ENCODE measurements at regions of chr5 and their contacts with region 1.

Region 1: GRCh38 chr5:145981589-145982491 is 45.5 kb downstream of the SH3RF2 start:
- DNase-seq: peak; percentile 65 to 76
- H3K4me3 ChIP-seq: no peak overlapping the region
- H3K4me3 Mint-ChIP-seq: peak overlapping the region; percentile 27
- H3K27ac Mint-ChIP-seq: peak overlapping the region; percentile 74
- H3K4me1 ChIP-seq: peaks cover 70% of the 10 kb centered on the region
- H3K4me1 Mint-ChIP-seq: peaks cover 56% of the 10 kb centered on the region
- H3K27me3 ChIP-seq: no peaks in the 10 kb centered on the region
- H3K27me3 Mint-ChIP-seq: no peaks in the 10 kb centered on the region
- CTCF ChIP-seq: no peak

Region 2: DNA sequence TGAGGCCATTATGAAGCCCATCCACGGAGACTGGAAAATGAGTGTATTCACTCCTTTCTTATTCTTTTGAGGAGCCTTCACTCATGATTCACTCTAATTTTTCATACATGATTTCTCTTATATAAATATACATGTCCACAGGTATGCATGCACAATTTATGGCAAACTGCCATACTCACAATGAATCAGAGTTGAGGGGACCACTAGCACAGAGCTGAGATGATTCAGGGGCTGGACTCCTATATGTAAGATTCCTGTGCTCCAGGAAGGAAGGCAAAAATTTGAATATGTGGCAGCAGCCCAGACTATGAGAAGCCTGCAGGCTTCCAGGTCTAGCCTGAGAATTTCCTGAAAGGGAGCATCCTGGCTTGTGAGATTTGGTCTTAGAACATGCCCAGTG is 631.3 kb before region 1 on chr5:
- CTCF ChIA-PET with region 1: no interaction called
- POLR2A ChIA-PET with region 1: no interaction called
- intact Hi-C with region 1: no loop called
- DNase-seq: no peak
- H3K4me3 ChIP-seq: no peak overlapping the region
- H3K4me3 Mint-ChIP-seq: no peak overlapping the region
- H3K27ac Mint-ChIP-seq: no peak overlapping the region
- H3K4me1 ChIP-seq: no peaks in the 10 kb centered on the region
- H3K4me1 Mint-ChIP-seq: no peaks in the 10 kb centered on the region
- H3K27me3 ChIP-seq: no peaks in the 10 kb centered on the region
- H3K27me3 Mint-ChIP-seq: no peaks in the 10 kb centered on the region
- CTCF ChIP-seq: no peak

Region 3: DNA sequence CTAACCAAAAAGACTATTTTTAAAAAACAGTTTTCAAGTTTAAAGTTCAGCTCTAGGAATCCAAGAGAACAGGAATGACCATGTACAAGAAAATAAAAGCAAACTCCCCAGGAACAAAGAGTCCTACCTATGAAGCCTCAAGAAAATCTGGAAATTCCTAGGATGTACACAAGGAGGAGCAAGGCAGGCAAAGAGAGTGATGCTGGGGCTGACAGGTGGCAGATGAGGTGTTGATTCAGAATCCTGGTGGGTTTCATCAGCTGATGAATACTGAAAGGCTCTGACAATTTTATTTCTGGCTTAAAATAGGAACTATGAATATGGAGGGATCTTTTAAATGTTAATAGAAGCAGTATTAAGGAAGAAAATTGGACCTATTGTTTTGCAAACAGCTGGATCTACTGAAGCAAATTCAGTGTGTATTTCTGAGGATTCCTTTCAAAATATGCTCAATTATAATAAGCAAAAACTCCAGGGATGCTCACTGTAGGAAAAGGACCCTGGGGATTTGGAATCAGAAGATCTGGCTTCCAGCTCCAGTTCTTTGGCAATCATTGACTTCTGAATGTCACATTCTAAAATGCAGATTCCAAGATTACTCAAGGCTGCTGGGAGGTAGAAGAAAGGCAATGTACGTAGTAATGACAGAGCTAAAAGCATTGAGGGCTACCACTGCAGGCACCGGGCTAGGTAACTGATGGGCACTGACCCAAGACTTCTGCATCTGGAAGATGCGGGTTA is 73.5 kb before region 1 on chr5:
- CTCF ChIA-PET with region 1: interaction called, 5 read pairs
- POLR2A ChIA-PET with region 1: no interaction called
- intact Hi-C with region 1: loop called (anchors 1 kb)
- DNase-seq: peak in 1 of 2 experiments; percentile 52
- H3K4me3 ChIP-seq: no peak overlapping the region
- H3K4me3 Mint-ChIP-seq: no peak overlapping the region
- H3K27ac Mint-ChIP-seq: peak overlapping the region; percentile 18
- H3K4me1 ChIP-seq: peaks cover 14% of the 10 kb centered on the region; the same call in 1 of the 2 replicates
- H3K4me1 Mint-ChIP-seq: peaks cover 29% of the 10 kb centered on the region
- H3K27me3 ChIP-seq: no peaks in the 10 kb centered on the region
- H3K27me3 Mint-ChIP-seq: no peaks in the 10 kb centered on the region
- CTCF ChIP-seq: peak; percentile 43 to 69

Region 4: DNA sequence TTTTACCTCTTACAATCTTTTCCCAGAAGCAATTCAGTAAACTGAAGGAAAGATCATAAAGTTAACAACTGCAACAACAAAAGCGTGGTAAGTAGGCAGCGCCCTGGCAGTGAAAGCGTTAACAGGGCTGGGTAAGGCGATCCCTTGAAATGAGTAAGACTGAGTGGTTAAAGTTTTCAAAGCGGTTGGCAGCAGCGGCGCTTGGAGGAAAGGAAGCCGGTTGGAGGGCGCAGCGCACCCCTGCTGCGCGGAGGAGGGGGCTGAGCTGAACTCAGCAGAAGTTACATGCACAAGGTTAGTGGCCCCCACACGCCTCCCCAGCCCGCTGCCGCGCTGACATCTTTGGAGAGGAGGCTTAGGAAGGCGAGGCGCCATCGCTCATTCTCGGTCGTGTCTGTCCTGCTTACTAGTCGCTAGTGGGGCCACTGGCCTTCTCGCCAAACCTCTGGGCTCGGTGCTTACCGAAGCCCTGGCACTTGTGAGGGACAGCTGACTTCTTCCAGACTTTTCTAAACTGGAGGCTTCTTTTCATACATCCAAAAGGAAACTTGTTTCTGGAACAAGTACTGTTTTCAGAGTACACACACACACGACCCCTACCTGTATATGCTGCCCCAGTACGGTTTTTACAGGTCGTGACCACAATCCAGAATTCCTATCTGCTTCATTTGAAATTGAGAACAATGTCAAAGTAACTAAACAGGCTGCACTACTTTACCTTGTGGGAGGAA is 45.3 kb before region 1 on chr5 and contains the start of gene SH3RF2:
- CTCF ChIA-PET with region 1: interaction called, 14 read pairs
- POLR2A ChIA-PET with region 1: interaction called, 11 read pairs
- intact Hi-C with region 1: loop called (anchors 1 kb)
- DNase-seq: peak; percentile 83 to 89
- H3K4me3 ChIP-seq: peak within 1 kb of the TSS; percentile 61
- H3K4me3 Mint-ChIP-seq: peak within 1 kb of the TSS; percentile 82
- H3K27ac Mint-ChIP-seq: peak within 1 kb of the TSS; percentile 78
- H3K4me1 ChIP-seq: peaks cover 54% of the 10 kb centered on the region
- H3K4me1 Mint-ChIP-seq: peaks cover 43% of the 10 kb centered on the region
- H3K27me3 ChIP-seq: no peaks in the 10 kb centered on the region
- H3K27me3 Mint-ChIP-seq: no peaks in the 10 kb centered on the region
- CTCF ChIP-seq: no peak
- total RNA-seq, gene SH3RF2: 49.4 and 55.0 TPM in 2 replicates

Region 5: DNA sequence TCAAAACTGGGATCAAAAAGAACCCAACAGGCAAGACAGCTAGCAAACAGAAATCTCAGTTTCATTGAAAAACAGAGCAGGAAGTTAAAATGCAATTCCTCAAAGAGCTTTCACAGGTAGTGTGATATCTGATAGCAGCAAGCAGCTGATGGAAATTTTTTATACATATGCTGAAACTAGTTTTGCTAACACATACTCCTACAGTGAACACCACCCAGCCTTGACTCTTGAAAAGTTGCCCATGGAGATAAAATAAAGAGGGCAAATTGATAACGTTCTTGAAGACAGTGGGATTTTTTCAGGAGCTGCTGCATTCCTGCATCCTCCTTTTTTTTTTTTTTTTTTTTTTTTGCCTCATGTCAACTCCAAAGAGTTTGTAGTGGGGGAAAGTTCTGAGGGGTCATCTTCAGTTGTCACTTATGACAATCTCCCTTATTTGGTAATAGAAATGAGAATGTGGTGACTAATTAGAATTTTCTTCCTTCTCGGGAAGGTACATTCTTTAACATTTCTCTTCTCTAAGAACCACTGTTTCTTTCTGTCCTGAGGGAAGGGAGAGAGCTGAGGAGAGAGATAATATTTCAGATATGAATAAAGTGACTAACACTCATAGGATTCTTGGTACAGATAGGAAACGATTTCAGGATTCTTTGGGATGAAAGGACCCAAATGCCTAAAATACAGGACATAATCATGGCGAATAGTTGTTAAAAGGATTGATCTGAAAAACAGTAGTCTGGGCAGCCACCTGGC is 20.8 kb before region 1 on chr5:
- CTCF ChIA-PET with region 1: no interaction called
- POLR2A ChIA-PET with region 1: no interaction called
- intact Hi-C with region 1: loop called (anchors 1 kb)
- DNase-seq: no peak
- H3K4me3 ChIP-seq: no peak overlapping the region
- H3K4me3 Mint-ChIP-seq: no peak overlapping the region
- H3K27ac Mint-ChIP-seq: peak overlapping the region; percentile 46
- H3K4me1 ChIP-seq: peaks cover 62% of the 10 kb centered on the region
- H3K4me1 Mint-ChIP-seq: peaks cover 43% of the 10 kb centered on the region
- H3K27me3 ChIP-seq: no peaks in the 10 kb centered on the region
- H3K27me3 Mint-ChIP-seq: no peaks in the 10 kb centered on the region
- CTCF ChIP-seq: no peak

Region 6: DNA sequence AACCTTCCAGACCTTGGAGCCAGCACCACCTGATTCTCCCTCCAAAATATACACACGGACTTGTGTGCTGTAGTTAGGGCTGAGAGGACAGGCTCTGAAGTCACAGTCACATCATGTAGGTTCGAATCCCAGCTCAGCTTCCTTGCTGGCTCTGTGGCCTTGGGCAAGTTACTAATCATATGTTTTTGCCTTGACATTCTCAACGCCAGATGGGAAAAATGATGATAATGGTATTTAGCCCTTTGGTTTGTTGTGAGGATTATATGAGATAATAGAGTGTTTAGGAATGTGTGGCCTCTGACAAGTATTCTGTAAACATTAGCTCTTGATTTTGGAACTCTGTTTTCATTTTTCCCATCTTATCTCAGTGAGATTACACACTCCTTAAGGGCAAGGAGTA is 51.1 kb after region 1 on chr5:
- CTCF ChIA-PET with region 1: interaction called, 3 read pairs
- POLR2A ChIA-PET with region 1: interaction called, 3 read pairs
- intact Hi-C with region 1: loop called (anchors 1 kb)
- DNase-seq: peak in 1 of 2 experiments; percentile 39
- H3K4me3 ChIP-seq: no peak overlapping the region
- H3K4me3 Mint-ChIP-seq: no peak overlapping the region
- H3K27ac Mint-ChIP-seq: peak overlapping the region; percentile 24
- H3K4me1 ChIP-seq: peaks cover 39% of the 10 kb centered on the region
- H3K4me1 Mint-ChIP-seq: peaks cover 25% of the 10 kb centered on the region
- H3K27me3 ChIP-seq: no peaks in the 10 kb centered on the region
- H3K27me3 Mint-ChIP-seq: no peaks in the 10 kb centered on the region
- CTCF ChIP-seq: no peak

Region 7: DNA sequence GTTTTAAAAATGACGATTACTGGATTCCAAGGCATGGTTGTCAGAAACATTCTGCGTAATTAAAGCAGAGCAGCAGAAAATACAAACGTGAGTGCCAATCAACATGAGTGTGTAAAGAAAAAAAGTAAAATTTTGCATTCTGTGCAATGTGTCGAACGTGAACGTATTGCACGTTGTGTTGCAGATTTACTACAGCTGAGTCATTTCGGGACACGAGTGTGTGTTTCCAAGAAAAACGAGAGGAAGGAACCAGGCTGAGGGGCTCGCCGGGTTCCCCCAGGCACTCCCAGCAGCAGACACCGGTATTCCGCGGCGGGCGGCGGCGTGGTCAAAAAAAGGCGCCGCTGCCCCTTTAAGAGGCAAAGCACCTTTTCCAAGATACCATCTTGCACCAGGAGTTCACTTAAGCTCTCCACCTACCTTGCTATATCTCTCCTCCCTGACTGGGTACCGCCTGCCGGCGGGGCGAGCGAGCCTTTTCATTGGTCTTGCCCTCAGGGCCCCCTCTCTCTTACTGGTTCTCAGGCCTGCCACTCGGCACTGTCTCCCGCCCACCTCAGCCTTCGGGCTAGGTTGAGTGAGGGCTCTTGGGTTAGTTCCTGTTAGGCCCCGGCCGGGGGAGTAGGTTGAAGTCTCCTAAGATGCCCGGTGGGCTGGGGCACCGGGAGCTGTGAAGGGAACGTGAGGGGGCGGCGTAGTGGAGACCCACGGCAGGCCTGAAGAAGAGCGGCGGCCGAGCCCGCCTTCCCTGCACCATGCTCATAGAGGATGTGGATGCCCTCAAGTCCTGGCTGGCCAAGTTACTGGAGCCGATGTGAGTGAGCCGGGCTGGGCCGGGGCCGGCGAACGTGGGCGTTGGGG is 221.4 kb after region 1 on chr5 and contains the start of gene RBM27:
- CTCF ChIA-PET with region 1: no interaction called
- POLR2A ChIA-PET with region 1: no interaction called
- intact Hi-C with region 1: loop called (anchors 1 kb)
- DNase-seq: peak; percentile 97 to 99
- H3K4me3 ChIP-seq: peak within 1 kb of the TSS; percentile 77
- H3K4me3 Mint-ChIP-seq: no peak within 1 kb of the TSS
- H3K27ac Mint-ChIP-seq: no peak within 1 kb of the TSS
- H3K4me1 ChIP-seq: peaks cover 4% of the 10 kb centered on the region; the same call in 1 of the 2 replicates
- H3K4me1 Mint-ChIP-seq: no peaks in the 10 kb centered on the region
- H3K27me3 ChIP-seq: no peaks in the 10 kb centered on the region
- H3K27me3 Mint-ChIP-seq: no peaks in the 10 kb centered on the region
- CTCF ChIP-seq: no peak
- total RNA-seq, gene RBM27: 23.9 and 24.3 TPM in 2 replicates

Region 8: GRCh38 chr5:146363161-146363874 is 381.5 kb after region 1 on chr5:
- CTCF ChIA-PET with region 1: no interaction called
- POLR2A ChIA-PET with region 1: no interaction called
- intact Hi-C with region 1: no loop called
- DNase-seq: no peak
- H3K4me3 ChIP-seq: no peak overlapping the region
- H3K4me3 Mint-ChIP-seq: no peak overlapping the region
- H3K27ac Mint-ChIP-seq: no peak overlapping the region
- H3K4me1 ChIP-seq: no peaks in the 10 kb centered on the region
- H3K4me1 Mint-ChIP-seq: no peaks in the 10 kb centered on the region
- H3K27me3 ChIP-seq: no peaks in the 10 kb centered on the region
- H3K27me3 Mint-ChIP-seq: peaks cover 27% of the 10 kb centered on the region
- CTCF ChIP-seq: no peak